ENCODE measurements at regions of chr11 and their contacts with region 1.

Region 1: GRCh38 chr11:76799066-76799804 is 16.1 kb downstream of the TSKU start:
- DNase-seq: peak; percentile 91
- CTCF ChIP-seq: peak; percentile 97

Region 2: DNA sequence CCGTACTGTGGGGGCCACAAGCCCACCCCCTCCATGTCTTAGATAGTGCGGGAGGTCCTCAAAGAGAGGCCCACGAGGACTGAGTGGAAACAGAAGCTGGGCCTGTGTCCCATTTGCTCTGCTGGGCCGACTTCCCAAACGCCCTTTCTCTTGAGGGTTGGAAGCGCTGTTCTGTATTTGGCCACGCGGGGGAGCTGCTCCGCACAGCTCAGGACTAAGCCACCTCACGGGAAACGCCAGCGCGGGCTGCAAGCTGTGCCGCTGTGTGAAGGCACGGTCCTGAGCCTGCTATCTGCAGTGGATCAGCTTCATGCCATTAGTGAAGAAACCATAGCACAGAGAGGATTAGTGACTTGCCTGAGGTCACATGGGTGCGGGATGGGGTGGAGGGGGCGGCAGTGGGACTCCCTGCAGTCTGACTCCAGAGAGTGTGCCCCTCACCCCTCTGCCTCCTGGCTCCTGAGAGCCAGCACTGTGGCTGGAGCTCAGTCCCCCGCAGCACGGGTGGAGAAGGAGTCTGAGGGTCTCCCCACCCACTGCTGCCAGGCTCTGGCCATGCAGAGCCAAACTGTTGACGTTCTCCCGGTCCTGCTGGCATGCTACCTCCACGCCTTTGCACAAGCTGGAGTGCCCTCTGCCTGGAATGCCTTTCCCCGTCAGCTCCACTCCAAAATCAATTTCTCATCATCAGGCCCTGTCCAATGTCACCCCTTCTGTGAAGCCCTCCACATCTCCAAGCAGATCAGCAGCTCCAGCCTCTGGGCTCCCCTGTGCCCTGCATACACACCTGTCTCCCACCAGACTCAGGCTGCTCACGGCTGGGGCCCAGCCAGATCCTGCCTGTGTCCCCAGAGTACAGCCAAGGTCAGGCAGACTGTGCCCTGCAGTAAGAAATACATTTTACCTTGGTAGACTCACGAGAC is 77.2 kb before region 1 on chr11:
- in situ Hi-C with region 1: loop called (anchors 10 kb)
- DNase-seq: peak; percentile 79
- CTCF ChIP-seq: peak; percentile 95